Activated T-helper 2 cell treated with anti-CD3 and anti-CD28 coated beads, Interferon-gamma antibody, Interleukin-2, Interleukin-4, amounts not matched to agents 10 μg/mL and 5 μg/mL and 100 μg/mL, durations not matched to agents 14 hours and 24 hours and 36 hours (primary cell): ENCODE measurements at regions of chr16 and their contacts with region 1.

Region 1: GRCh38 chr16:71883849-71884638 is at the start of gene ZNF821:
- DNase-seq: peak; percentile 68
- H3K4me3 Mint-ChIP-seq: peak within 1 kb of the TSS; percentile 96
- H3K27ac Mint-ChIP-seq: peak within 1 kb of the TSS; percentile 95
- H3K4me1 Mint-ChIP-seq: peaks cover 45% of the 10 kb centered on the region
- H3K27me3 Mint-ChIP-seq: peaks cover 9% of the 10 kb centered on the region
- total RNA-seq, gene ZNF821: 7.9 and 9.2 TPM in 2 replicates

Region 2: DNA sequence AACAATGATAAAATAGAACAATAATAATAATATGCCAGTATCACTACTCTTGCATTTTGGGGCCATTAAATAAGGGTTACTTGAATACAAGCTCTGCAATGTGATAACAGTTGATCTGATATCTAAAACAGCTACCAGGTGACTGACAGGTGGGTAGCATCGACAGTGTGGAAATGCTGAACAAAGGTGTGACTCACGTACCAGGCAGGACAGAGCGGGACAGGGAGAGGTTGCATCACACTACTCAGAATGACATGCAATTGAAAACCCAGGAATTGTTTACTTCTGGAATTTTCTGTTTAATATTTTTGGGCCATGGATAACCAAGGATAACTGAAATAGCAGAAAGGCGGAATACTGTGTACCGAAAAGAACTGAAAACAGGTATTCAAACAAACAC is 379.1 kb before region 1 on chr16:
- intact Hi-C with region 1: no loop called
- DNase-seq: no peak
- H3K4me3 Mint-ChIP-seq: no peak overlapping the region
- H3K27ac Mint-ChIP-seq: no peak overlapping the region
- H3K4me1 Mint-ChIP-seq: no peaks in the 10 kb centered on the region
- H3K27me3 Mint-ChIP-seq: peaks cover 8% of the 10 kb centered on the region

Region 3: GRCh38 chr16:71808593-71809459 is 75.2 kb before region 1 on chr16 and contains the start of gene AP1G1:
- intact Hi-C with region 1: loop called (anchors 2 kb)
- DNase-seq: peak; percentile 91
- H3K4me3 Mint-ChIP-seq: peak within 1 kb of the TSS; percentile 95
- H3K27ac Mint-ChIP-seq: peak within 1 kb of the TSS; percentile 100
- H3K4me1 Mint-ChIP-seq: peaks cover 16% of the 10 kb centered on the region
- H3K27me3 Mint-ChIP-seq: no peaks in the 10 kb centered on the region
- total RNA-seq, gene AP1G1: 90.6 and 91.6 TPM in 2 replicates

Region 4: DNA sequence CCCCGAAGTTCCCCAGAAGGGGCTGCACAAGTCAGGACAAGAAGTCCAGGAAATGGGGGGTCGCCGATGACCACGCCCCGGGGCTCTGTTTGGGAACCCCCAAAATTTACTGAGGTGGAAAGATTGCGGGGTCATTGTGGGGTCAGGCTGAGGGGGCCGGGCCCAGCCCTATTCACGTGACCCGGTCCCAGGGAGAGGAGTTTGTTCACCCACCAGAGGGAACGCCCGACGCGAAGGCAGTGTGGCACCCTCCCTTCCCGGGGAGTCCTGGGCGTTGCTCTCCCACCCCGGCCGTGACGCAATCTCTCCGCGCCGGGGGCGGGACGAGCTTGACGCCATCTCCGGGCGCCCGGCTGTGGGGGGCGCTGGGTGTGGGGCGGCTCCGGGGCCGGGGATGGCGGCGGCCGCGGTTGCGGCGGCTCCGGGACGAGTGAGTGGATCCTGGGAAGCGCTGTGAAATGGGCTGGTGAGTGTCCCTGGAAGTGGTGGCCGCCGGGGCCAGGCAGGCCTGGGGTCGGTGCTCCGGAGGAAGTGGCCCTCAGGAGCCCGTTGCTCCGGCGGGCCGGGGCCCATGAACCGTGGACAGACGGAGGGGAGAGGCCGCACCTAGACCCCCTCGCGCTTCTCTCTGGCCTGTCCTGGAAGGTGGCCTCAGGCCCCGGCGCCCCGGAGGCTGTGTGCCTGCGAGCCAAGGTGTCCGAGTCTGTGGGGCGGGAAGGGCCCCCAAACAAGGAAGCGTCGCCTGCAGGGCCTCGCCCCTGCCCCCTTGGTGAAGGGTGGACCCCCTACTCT is 38.2 kb before region 1 on chr16 and contains the start of gene ATXN1L:
- intact Hi-C with region 1: loop called (anchors 2 kb)
- DNase-seq: peak; percentile 92
- H3K4me3 Mint-ChIP-seq: peak within 1 kb of the TSS; percentile 89
- H3K27ac Mint-ChIP-seq: peak within 1 kb of the TSS; percentile 94
- H3K4me1 Mint-ChIP-seq: peaks cover 27% of the 10 kb centered on the region
- H3K27me3 Mint-ChIP-seq: no peaks in the 10 kb centered on the region
- total RNA-seq, gene ATXN1L: 17.2 and 19.7 TPM in 2 replicates

Region 5: DNA sequence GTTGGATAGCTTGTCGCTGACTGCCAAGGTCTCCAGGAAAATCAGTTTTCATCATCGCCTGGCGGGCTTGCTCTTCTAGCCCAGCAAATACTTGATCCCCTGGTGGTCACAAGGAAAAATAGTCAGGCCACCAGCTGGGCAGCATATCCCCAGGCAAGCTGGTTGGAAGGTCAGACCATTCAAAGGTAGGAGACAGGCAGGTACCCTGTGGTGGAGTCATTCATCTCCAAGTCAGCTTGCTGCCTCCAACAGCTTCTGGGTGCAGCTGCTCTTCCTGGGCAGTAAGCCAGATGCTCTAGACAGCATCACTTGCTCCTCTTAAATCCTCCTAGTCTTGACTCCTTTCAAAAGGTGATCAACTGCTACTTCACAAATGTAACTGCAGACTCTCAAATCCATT is 16.1 kb before region 1 on chr16:
- intact Hi-C with region 1: loop called (anchors 1 kb)
- DNase-seq: no peak
- H3K4me3 Mint-ChIP-seq: no peak overlapping the region
- H3K27ac Mint-ChIP-seq: no peak overlapping the region
- H3K4me1 Mint-ChIP-seq: peaks cover 18% of the 10 kb centered on the region
- H3K27me3 Mint-ChIP-seq: no peaks in the 10 kb centered on the region

Region 6: GRCh38 chr16:71961066-71962039 is 77.3 kb after region 1 on chr16:
- intact Hi-C with region 1: loop called (anchors 5 kb)
- DNase-seq: peak; percentile 67
- H3K4me3 Mint-ChIP-seq: no peak overlapping the region
- H3K27ac Mint-ChIP-seq: no peak overlapping the region
- H3K4me1 Mint-ChIP-seq: peaks cover 18% of the 10 kb centered on the region
- H3K27me3 Mint-ChIP-seq: peaks cover 4% of the 10 kb centered on the region

Region 7: GRCh38 chr16:72271699-72272240 is 387.7 kb after region 1 on chr16:
- intact Hi-C with region 1: no loop called
- DNase-seq: no peak
- H3K4me3 Mint-ChIP-seq: no peak overlapping the region
- H3K27ac Mint-ChIP-seq: no peak overlapping the region
- H3K4me1 Mint-ChIP-seq: no peaks in the 10 kb centered on the region
- H3K27me3 Mint-ChIP-seq: no peaks in the 10 kb centered on the region

Region 8: GRCh38 chr16:72285728-72286127 is 401.7 kb after region 1 on chr16:
- intact Hi-C with region 1: no loop called
- DNase-seq: no peak
- H3K4me3 Mint-ChIP-seq: no peak overlapping the region
- H3K27ac Mint-ChIP-seq: no peak overlapping the region
- H3K4me1 Mint-ChIP-seq: no peaks in the 10 kb centered on the region
- H3K27me3 Mint-ChIP-seq: no peaks in the 10 kb centered on the region